ENCODE measurements at regions of chr15 and their contacts with region 1.

Region 1: DNA sequence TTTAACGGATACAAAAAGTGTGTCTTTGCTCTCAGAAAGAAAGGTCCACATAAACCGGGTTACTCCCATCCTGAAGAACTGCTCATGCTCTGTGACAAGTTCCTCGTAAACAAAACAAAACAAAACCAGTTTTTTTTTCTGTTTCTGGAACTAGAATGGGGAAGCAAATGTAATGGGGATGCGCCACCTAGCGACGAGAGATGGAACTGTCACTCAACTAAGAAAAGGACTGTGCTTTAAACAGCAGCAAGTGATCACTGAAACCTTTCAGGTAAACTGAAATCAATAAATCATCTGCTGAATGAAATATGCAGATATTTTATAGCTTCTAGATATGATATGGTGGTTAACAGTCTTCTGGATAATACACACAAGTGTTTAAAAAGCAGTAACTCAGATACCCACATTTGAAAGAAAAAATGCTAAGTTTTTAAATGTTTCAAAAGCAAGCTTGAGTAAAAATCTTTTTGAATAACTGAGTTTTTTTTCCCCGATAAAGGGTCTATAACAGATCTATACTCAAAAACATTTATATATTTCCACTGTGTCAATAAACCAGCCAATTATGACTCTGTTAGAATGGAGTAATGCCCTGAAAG is 10.9 kb downstream of the TM2D3 start:
- DNase-seq: peak in 1 of 2 experiments; percentile 71
- H3K4me3 ChIP-seq: no peak overlapping the region
- H3K4me3 Mint-ChIP-seq: no peak overlapping the region
- H3K27ac Mint-ChIP-seq: no peak overlapping the region
- H3K4me1 ChIP-seq: peaks cover 13% of the 10 kb centered on the region
- H3K4me1 Mint-ChIP-seq: peaks cover 8% of the 10 kb centered on the region
- H3K27me3 ChIP-seq: no peaks in the 10 kb centered on the region
- H3K27me3 Mint-ChIP-seq: no peaks in the 10 kb centered on the region
- CTCF ChIP-seq: peak; percentile 83 to 87

Region 2: DNA sequence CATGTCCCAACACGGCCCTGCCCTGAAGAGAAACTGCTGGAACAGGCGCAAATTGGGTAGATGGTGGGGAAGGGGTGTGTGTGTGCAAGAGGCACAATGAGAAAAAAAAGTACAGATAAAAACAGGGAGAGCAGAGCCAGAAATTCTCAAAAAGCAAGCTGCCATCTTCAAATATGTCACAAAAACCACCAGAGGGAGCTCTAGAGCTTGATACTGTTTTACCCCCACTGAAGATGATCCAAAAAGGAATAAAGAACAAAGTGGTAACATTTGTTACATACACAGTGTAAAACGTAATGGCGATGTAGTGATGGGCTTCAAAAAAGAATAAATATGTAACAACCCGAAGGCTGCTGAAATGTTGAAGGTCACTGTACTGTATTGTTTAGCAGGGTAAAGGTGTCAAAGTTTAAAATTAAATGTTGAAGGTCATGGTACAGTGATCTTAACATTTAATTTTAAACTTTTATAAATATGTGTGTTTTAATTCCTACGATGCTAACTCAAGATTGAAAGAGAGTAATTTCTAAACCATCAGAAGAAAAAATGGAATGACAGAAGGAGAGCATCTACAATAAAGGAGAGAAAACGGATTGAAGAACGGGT is 352.3 kb before region 1 on chr15:
- CTCF ChIA-PET with region 1: interaction called, 3 read pairs
- POLR2A ChIA-PET with region 1: no interaction called
- intact Hi-C with region 1: loop called (anchors 1 kb)
- DNase-seq: peak in 1 of 2 experiments; percentile 44
- H3K4me3 ChIP-seq: no peak overlapping the region
- H3K4me3 Mint-ChIP-seq: no peak overlapping the region
- H3K27ac Mint-ChIP-seq: no peak overlapping the region
- H3K4me1 ChIP-seq: peaks cover 7% of the 10 kb centered on the region; the same call in 1 of the 2 replicates
- H3K4me1 Mint-ChIP-seq: peaks cover 7% of the 10 kb centered on the region
- H3K27me3 ChIP-seq: no peaks in the 10 kb centered on the region
- H3K27me3 Mint-ChIP-seq: no peaks in the 10 kb centered on the region
- CTCF ChIP-seq: peak; percentile 55 to 72

Region 3: DNA sequence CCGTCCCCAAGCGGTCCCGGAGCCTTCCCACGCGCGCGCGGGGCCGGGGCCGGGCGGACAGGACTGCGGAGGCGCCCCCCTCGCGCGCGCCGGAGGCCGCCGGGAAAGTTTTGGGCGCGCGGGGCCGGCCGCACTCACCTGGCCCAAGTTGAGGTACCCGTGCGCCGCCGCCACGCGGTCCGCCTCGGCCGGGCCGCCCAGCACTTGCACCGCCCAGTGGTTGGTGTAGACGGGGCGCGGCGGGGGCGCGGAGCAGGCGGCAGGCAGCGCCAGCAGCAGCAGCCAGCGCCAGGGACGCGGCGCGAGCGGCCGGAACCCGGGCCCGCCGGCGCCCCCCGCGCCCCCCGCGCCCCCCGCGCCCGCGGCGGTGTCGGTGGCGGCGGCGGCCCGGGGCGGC is 152.0 kb before region 1 on chr15:
- CTCF ChIA-PET with region 1: no interaction called
- POLR2A ChIA-PET with region 1: no interaction called
- intact Hi-C with region 1: loop called (anchors 5 kb)
- DNase-seq: peak; percentile 68 to 81
- H3K4me3 ChIP-seq: peak overlapping the region; percentile 69
- H3K4me3 Mint-ChIP-seq: peak overlapping the region; percentile 54
- H3K27ac Mint-ChIP-seq: no peak overlapping the region
- H3K4me1 ChIP-seq: no peaks in the 10 kb centered on the region
- H3K4me1 Mint-ChIP-seq: peaks cover 16% of the 10 kb centered on the region
- H3K27me3 ChIP-seq: no peaks in the 10 kb centered on the region
- H3K27me3 Mint-ChIP-seq: peaks cover 3% of the 10 kb centered on the region
- CTCF ChIP-seq: peak in 1 of 2 experiments; percentile 6

Region 4: DNA sequence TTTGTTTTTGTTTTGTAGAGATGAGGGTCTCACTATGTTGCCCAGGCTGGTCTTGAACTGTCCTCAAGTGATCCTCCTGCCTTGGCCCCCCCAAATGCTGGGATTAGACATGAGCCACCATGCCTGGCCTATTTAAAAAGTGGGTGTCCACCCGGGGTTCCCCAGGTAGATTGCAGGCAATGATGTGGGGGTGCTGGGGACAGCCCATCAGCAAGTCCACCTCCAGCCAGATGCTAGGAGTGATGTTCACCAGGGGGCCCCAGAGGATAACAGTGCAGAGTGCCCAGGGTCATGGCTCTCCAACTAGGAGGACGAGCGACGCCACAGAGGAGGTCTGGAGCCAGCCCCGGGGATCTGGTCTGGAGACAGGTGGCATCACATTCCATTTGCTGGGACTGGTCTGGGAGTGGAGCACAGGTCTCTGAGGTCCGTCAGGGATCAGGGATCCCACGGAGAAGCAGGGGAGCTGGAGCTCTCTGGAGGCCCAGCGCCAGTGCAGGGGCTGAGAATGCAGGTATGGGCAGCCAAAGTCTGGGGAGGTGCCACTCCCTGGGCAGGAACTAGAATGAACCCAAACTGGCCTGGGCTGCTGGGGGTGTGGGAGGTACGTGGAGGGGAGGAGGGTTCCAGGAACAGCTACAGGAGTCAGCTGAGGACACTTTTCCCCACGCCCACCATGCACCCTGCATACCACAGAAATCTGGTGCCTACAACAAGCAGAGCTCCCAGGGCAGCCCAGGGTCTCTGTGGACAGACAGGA is 100.6 kb before region 1 on chr15:
- CTCF ChIA-PET with region 1: no interaction called
- POLR2A ChIA-PET with region 1: no interaction called
- intact Hi-C with region 1: loop called (anchors 1 kb)
- DNase-seq: no peak
- H3K4me3 ChIP-seq: no peak overlapping the region
- H3K4me3 Mint-ChIP-seq: no peak overlapping the region
- H3K27ac Mint-ChIP-seq: no peak overlapping the region
- H3K4me1 ChIP-seq: no peaks in the 10 kb centered on the region
- H3K4me1 Mint-ChIP-seq: peaks cover 13% of the 10 kb centered on the region
- H3K27me3 ChIP-seq: no peaks in the 10 kb centered on the region
- H3K27me3 Mint-ChIP-seq: no peaks in the 10 kb centered on the region
- CTCF ChIP-seq: peak in 1 of 2 experiments; percentile 22

Region 5: GRCh38 chr15:101675796-101676582 is 34.7 kb after region 1 on chr15:
- CTCF ChIA-PET with region 1: no interaction called
- POLR2A ChIA-PET with region 1: no interaction called
- intact Hi-C with region 1: no loop called
- DNase-seq: no peak
- H3K4me3 ChIP-seq: no peak overlapping the region
- H3K4me3 Mint-ChIP-seq: no peak overlapping the region
- H3K27ac Mint-ChIP-seq: no peak overlapping the region
- H3K4me1 ChIP-seq: 0 out of 2 replicates have a peak, but pooled peaks cover 9% of the 10 kb centered on the region
- H3K4me1 Mint-ChIP-seq: peaks cover 5% of the 10 kb centered on the region
- H3K27me3 ChIP-seq: no peaks in the 10 kb centered on the region
- H3K27me3 Mint-ChIP-seq: no peaks in the 10 kb centered on the region
- CTCF ChIP-seq: no peak